ENCODE measurements at regions of chr6 and their contacts with region 1.

Region 1: GRCh38 chr6:151440930-151441329 is 11.0 kb downstream of the RMND1 start:
- DNase-seq: no peak
- ATAC-seq: peak; percentile 65
- H3K4me3 ChIP-seq: peak overlapping the region; percentile 32; the same call in 1 of the 2 replicates
- H3K27ac ChIP-seq: peak overlapping the region; percentile 61
- H3K4me1 ChIP-seq: peaks cover 13% of the 10 kb centered on the region
- H3K27me3 ChIP-seq: no peaks in the 10 kb centered on the region
- CTCF ChIP-seq: peak; percentile 24 to 50 (median 49); a peak in 5 of 6 replicates
- EP300 ChIP-seq: no peak
- POLR2A ChIP-seq: no peak
- RAD21 ChIP-seq: peak; percentile 67

Region 2: DNA sequence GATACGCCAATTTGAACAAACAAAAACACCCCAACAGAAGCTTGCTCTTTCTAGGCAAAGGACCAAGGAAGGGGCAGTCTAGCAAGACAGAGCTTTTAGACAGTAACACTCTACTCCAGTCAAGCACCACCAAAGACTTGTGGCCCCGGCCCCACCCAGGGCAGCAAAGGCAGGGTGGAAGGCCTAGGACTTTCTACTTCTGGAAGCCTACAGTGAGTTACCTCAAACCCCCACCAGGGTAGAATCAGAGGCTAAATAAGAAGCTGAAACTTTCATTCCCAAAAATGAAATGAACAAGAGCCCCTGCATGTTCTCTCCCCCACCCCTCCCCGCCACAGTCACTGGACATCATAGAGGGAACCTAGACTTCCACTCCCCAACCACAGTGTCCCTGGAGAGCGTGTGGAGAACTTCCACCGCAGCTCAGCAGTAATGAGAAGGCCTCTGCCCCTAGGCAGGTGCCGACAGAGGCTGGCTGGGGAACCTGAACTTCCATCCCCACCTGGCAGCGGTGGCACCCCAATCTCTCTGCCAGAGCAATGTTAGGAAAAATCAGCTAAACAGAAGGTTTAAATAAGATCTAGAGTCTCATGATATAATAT is 1832.4 kb before region 1 on chr6:
- CTCF ChIA-PET with region 1: no interaction called
- POLR2A ChIA-PET with region 1: no interaction called
- RAD21 ChIA-PET with region 1: no interaction called
- SMC1A ChIA-PET with region 1: no interaction called
- in situ Hi-C with region 1: no loop called
- intact Hi-C with region 1: no loop called
- DNase-seq: no peak
- ATAC-seq: peak; percentile 62
- H3K4me3 ChIP-seq: no peak overlapping the region
- H3K27ac ChIP-seq: no peak overlapping the region
- H3K4me1 ChIP-seq: no peaks in the 10 kb centered on the region
- H3K27me3 ChIP-seq: no peaks in the 10 kb centered on the region
- CTCF ChIP-seq: no peak
- EP300 ChIP-seq: no peak
- POLR2A ChIP-seq: no peak
- RAD21 ChIP-seq: no peak

Region 3: GRCh38 chr6:151451950-151452749 is 11.2 kb after region 1 on chr6 and contains the start of gene RMND1:
- CTCF ChIA-PET with region 1: interaction called, 30 read pairs
- POLR2A ChIA-PET with region 1: interaction called, 18 read pairs
- RAD21 ChIA-PET with region 1: interaction called, 24 read pairs
- SMC1A ChIA-PET with region 1: interaction called, 29 read pairs
- in situ Hi-C with region 1: no loop called
- intact Hi-C with region 1: no loop called
- DNase-seq: peak; percentile 99
- ATAC-seq: peak; percentile 97
- H3K4me3 ChIP-seq: peak within 1 kb of the TSS; percentile 85
- H3K27ac ChIP-seq: peak within 1 kb of the TSS; percentile 89
- H3K4me1 ChIP-seq: peaks cover 3% of the 10 kb centered on the region
- H3K27me3 ChIP-seq: no peaks in the 10 kb centered on the region
- CTCF ChIP-seq: no peak
- EP300 ChIP-seq: peak in 1 of 2 experiments; percentile 33; a peak in 2 of 4 replicates
- POLR2A ChIP-seq: peak; percentile 87
- RAD21 ChIP-seq: no peak
- polyA plus RNA-seq, gene RMND1: 18.9 to 24.0 TPM

Region 4: GRCh38 chr6:151475653-151476523 is 35.0 kb after region 1 on chr6:
- CTCF ChIA-PET with region 1: interaction called, 24 read pairs
- POLR2A ChIA-PET with region 1: no interaction called
- RAD21 ChIA-PET with region 1: interaction called, 7 read pairs
- SMC1A ChIA-PET with region 1: interaction called, 17 read pairs
- in situ Hi-C with region 1: no loop called
- intact Hi-C with region 1: loop called (anchors 5 kb)
- DNase-seq: no peak
- ATAC-seq: peak; percentile 96
- H3K4me3 ChIP-seq: 0 out of 2 replicates have a peak overlapping the region, but pooled peaks have one; percentile 7
- H3K27ac ChIP-seq: no peak overlapping the region
- H3K4me1 ChIP-seq: no peaks in the 10 kb centered on the region
- H3K27me3 ChIP-seq: no peaks in the 10 kb centered on the region
- CTCF ChIP-seq: peak; percentile 58 to 72 (median 71); a peak in 5 of 6 replicates
- EP300 ChIP-seq: no peak
- POLR2A ChIP-seq: no peak
- RAD21 ChIP-seq: peak; percentile 63

Region 5: GRCh38 chr6:151498327-151498726 is 57.4 kb after region 1 on chr6:
- CTCF ChIA-PET with region 1: no interaction called
- POLR2A ChIA-PET with region 1: no interaction called
- RAD21 ChIA-PET with region 1: no interaction called
- SMC1A ChIA-PET with region 1: no interaction called
- in situ Hi-C with region 1: no loop called
- intact Hi-C with region 1: no loop called
- DNase-seq: no peak
- ATAC-seq: peak; percentile 75
- H3K4me3 ChIP-seq: no peak overlapping the region
- H3K27ac ChIP-seq: no peak overlapping the region
- H3K4me1 ChIP-seq: peaks cover 2% of the 10 kb centered on the region
- H3K27me3 ChIP-seq: peaks cover 3 to 6% of the 10 kb centered on the region in 2 experiments; a peak in 3 of 4 replicates
- CTCF ChIP-seq: no peak
- EP300 ChIP-seq: no peak
- POLR2A ChIP-seq: no peak
- RAD21 ChIP-seq: no peak

Region 6: GRCh38 chr6:151675746-151676416 is 235.0 kb after region 1 on chr6:
- CTCF ChIA-PET with region 1: interaction called, 10 read pairs
- POLR2A ChIA-PET with region 1: no interaction called
- RAD21 ChIA-PET with region 1: interaction called, 3 read pairs
- SMC1A ChIA-PET with region 1: interaction called, 4 read pairs
- in situ Hi-C with region 1: no loop called
- intact Hi-C with region 1: no loop called
- DNase-seq: peak; percentile 11
- ATAC-seq: peak; percentile 96
- H3K4me3 ChIP-seq: no peak overlapping the region
- H3K27ac ChIP-seq: no peak overlapping the region
- H3K4me1 ChIP-seq: peaks cover 5% of the 10 kb centered on the region; the same call in 1 of the 2 replicates
- H3K27me3 ChIP-seq: no peaks in the 10 kb centered on the region
- CTCF ChIP-seq: peak; percentile 95 to 99 (median 96)
- EP300 ChIP-seq: no peak
- POLR2A ChIP-seq: no peak
- RAD21 ChIP-seq: peak; percentile 90